Adrenal gland (tissue), 19 donors: ENCODE measurements at regions of chr1 and their contacts with region 1.

Region 1: GRCh38 chr1:186985889-186986491 is 157.2 kb downstream of the PLA2G4A start:
- DNase-seq: peak in 2 of 7 donors; percentile 1 to 16
- H3K4me3 ChIP-seq: no peak overlapping the region
- H3K27ac ChIP-seq: no peak overlapping the region
- H3K4me1 ChIP-seq: peaks cover 0 to 4% of the 10 kb centered on the region in 2 donors
- H3K27me3 ChIP-seq: no peaks in the 10 kb centered on the region
- CTCF ChIP-seq: peak; percentile 39 to 77 (median 70)
- POLR2A ChIP-seq: no peak

Region 2: GRCh38 chr1:186482661-186483255 is 503.2 kb before region 1 on chr1:
- intact Hi-C with region 1: loop called (anchors 5 to 10 kb)
- DNase-seq: peak; percentile 28 to 78 (median 45)
- H3K4me3 ChIP-seq: no peak overlapping the region
- H3K27ac ChIP-seq: no peak overlapping the region
- H3K4me1 ChIP-seq: no peaks in the 10 kb centered on the region
- H3K27me3 ChIP-seq: no peaks in the 10 kb centered on the region
- CTCF ChIP-seq: peak; percentile 50 to 77 (median 66)
- POLR2A ChIP-seq: no peak